PC-3 (cell line): ENCODE measurements at regions of chr1 and their contacts with region 1.

Region 1: DNA sequence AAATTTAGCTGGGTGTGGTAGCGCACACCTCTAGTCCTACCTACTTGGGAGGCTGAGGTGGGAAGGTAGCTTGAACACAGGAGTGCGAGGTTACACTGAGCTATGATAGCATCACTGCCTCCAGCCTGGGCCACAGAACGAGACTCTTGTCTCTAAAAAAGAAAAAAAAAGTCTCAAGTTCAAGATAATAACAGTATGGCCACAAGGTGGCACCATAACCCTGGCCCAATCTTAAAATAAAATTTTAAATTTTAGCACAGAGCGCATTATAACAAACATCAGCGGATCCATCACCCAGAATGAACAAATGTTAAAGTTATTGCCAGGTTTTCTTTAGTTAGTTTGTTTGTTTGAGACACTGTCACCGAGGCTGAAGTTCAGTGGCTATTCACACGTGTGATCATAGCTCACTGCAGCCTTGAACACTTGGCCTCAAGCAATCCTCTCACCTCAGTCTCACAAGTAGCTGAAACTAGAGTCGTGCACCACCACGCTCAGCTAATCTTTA is 2.9 kb upstream of the HTR6 start:
- DNase-seq: peak; percentile 76
- ATAC-seq: no peak
- H3K4me3 ChIP-seq: no peak overlapping the region
- H3K27ac ChIP-seq: no peak overlapping the region
- H3K4me1 ChIP-seq: peaks cover 13% of the 10 kb centered on the region; the same call in 1 of the 2 replicates
- H3K27me3 ChIP-seq: peaks cover 14% of the 10 kb centered on the region
- CTCF ChIP-seq: peak; percentile 81

Region 2: GRCh38 chr1:19311959-19312781 is 349.6 kb before region 1 on chr1 and contains the starts of genes AKR7A2 and SLC66A1:
- CTCF ChIA-PET with region 1: interaction called, 10 read pairs
- POLR2A ChIA-PET with region 1: no interaction called
- intact Hi-C with region 1: no loop called
- DNase-seq: peak; percentile 94
- ATAC-seq: peak; percentile 84
- H3K4me3 ChIP-seq: peak within 1 kb of the TSS; percentile 94
- H3K27ac ChIP-seq: peak within 1 kb of the TSS; percentile 8
- H3K4me1 ChIP-seq: peaks cover 48% of the 10 kb centered on the region
- H3K27me3 ChIP-seq: no peaks in the 10 kb centered on the region
- CTCF ChIP-seq: no peak
- total RNA-seq, gene AKR7A2: 63.3 and 72.3 TPM in 2 replicates
- total RNA-seq, gene SLC66A1: 27.7 and 28.9 TPM in 2 replicates

Region 3: GRCh38 chr1:19363536-19364152 is 298.1 kb before region 1 on chr1:
- CTCF ChIA-PET with region 1: no interaction called
- POLR2A ChIA-PET with region 1: interaction called, 25 read pairs
- intact Hi-C with region 1: no loop called
- DNase-seq: no peak
- ATAC-seq: no peak
- H3K4me3 ChIP-seq: no peak overlapping the region
- H3K27ac ChIP-seq: no peak overlapping the region
- H3K4me1 ChIP-seq: peaks cover 20% of the 10 kb centered on the region
- H3K27me3 ChIP-seq: no peaks in the 10 kb centered on the region
- CTCF ChIP-seq: no peak

Region 4: DNA sequence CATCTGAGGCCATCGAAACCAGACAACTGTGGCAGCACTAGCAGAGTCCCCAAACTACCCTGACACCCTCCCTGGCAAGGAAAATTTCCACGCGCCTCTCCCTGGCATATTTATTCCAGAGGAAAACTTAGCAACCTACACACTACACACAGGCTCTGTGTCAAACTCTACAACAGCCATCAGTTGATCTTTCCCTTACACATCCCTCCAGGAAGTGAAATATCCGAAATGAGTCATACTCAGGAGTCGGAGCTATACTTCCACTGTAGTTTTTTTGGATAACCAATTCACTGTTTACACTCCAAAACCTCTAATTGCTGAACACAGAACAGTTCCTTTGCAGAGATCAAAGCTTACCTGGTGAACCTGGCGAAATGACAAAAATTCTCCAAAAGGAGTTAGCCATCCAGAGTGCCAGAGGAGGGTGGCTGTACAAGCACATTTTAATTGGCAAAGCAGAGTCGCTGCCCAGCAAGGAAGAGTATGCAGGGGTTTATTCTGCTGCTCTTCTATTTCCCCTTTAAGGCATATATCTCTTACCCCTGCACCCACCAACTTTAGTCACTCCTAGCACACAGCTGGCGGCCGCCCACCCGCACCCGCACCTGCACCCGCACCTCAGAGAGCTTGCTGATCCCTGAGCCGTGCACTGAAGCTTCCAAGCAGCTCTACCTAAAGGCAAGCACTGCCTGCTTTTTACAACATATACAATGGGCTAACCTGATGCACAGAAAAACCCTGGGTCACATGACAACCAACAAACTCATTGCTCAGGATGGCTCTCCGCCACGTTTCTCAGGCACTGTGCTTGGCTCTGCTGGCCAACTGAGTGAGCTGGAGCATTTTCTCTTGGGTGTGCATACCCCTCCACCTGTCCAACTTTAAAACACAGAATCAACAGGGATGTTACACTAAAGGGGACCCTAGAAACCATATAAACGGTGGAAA is 231.4 kb before region 1 on chr1:
- CTCF ChIA-PET with region 1: no interaction called
- POLR2A ChIA-PET with region 1: interaction called, 27 read pairs
- intact Hi-C with region 1: no loop called
- DNase-seq: peak; percentile 88
- ATAC-seq: peak; percentile 98
- H3K4me3 ChIP-seq: no peak overlapping the region; the same call in 1 of the 2 replicates
- H3K27ac ChIP-seq: peak overlapping the region; percentile 60
- H3K4me1 ChIP-seq: peaks cover 20% of the 10 kb centered on the region
- H3K27me3 ChIP-seq: no peaks in the 10 kb centered on the region
- CTCF ChIP-seq: no peak

Region 5: DNA sequence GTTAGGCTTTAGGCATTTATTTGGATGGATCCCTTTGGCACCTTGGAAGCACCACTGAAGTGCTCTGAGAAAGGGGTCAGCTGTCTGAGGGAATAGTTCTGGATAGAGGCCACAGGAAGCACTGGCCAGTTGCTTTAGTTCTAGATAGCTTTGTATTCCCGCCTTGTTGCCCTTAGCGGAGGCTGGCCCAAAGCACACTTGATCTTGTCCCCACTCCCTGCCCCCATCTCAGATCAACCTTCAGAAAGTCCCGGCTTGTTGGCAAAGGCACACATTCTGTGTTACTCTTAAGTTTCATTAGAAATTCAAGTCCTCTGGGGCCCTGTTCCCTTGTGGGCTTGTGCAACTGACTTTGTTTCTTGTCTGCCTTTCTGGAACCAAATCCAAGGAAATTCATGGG is 32.9 kb before region 1 on chr1:
- CTCF ChIA-PET with region 1: no interaction called
- POLR2A ChIA-PET with region 1: no interaction called
- intact Hi-C with region 1: no loop called
- DNase-seq: no peak
- ATAC-seq: no peak
- H3K4me3 ChIP-seq: no peak overlapping the region
- H3K27ac ChIP-seq: no peak overlapping the region
- H3K4me1 ChIP-seq: no peaks in the 10 kb centered on the region
- H3K27me3 ChIP-seq: no peaks in the 10 kb centered on the region
- CTCF ChIP-seq: no peak

Region 6: DNA sequence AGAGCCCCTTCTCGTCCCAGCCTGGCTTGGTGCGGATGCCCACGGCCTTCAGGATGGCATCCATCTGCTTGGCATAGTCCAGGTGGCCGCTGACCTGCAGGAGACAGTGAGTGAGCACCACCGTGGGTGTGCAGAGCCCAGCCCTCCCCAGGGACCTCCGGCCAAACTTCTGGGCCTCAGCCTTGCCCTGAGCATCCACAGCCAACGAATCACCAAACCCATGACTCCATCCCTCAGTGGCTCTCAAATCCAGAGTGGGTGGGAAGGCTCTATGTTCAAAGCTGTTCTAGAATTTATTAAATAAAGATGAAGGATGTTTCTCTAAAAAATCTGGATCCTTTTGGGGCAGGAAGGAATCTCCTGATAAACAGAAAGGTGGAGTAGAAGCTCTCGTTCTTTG is 21.6 kb after region 1 on chr1:
- CTCF ChIA-PET with region 1: interaction called, 19 read pairs
- POLR2A ChIA-PET with region 1: no interaction called
- intact Hi-C with region 1: no loop called
- DNase-seq: no peak
- ATAC-seq: no peak
- H3K4me3 ChIP-seq: no peak overlapping the region
- H3K27ac ChIP-seq: no peak overlapping the region
- H3K4me1 ChIP-seq: no peaks in the 10 kb centered on the region
- H3K27me3 ChIP-seq: no peaks in the 10 kb centered on the region
- CTCF ChIP-seq: no peak

Region 7: GRCh38 chr1:19704247-19705113 is 42.7 kb after region 1 on chr1:
- CTCF ChIA-PET with region 1: interaction called, 34 read pairs
- POLR2A ChIA-PET with region 1: no interaction called
- intact Hi-C with region 1: loop called (anchors 1 kb)
- DNase-seq: peak; percentile 77
- ATAC-seq: peak; percentile 99
- H3K4me3 ChIP-seq: no peak overlapping the region
- H3K27ac ChIP-seq: no peak overlapping the region
- H3K4me1 ChIP-seq: no peaks in the 10 kb centered on the region
- H3K27me3 ChIP-seq: no peaks in the 10 kb centered on the region
- CTCF ChIP-seq: peak; percentile 88